ENCODE measurements at regions of chr5 and their contacts with region 1.

Region 1: DNA sequence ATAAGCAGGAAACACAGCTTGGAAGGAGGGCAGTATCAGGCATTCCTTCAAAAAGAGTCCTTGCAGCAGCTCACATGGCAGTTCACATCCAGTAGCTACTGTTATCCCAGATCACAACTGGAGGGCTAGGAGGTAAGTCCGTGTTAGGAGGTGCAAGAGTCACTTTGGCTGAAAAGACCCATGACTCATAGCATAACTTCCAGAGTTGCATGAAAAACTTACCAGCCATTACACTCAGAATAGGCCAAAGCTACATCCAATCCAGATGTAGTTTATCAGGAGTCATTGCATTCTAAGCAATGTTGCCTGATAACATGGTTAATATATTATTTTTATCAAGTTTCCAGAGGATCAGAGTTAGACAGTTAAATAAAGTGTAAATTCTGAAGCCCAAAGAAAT is 1126.4 kb upstream of the SEMA6A start:
- DNase-seq: no peak
- H3K4me3 ChIP-seq: no peak overlapping the region
- H3K27ac ChIP-seq: no peak overlapping the region
- H3K4me1 ChIP-seq: no peaks in the 10 kb centered on the region
- H3K27me3 ChIP-seq: no peaks in the 10 kb centered on the region
- CTCF ChIP-seq: no peak
- POLR2A ChIP-seq: no peak

Region 2: DNA sequence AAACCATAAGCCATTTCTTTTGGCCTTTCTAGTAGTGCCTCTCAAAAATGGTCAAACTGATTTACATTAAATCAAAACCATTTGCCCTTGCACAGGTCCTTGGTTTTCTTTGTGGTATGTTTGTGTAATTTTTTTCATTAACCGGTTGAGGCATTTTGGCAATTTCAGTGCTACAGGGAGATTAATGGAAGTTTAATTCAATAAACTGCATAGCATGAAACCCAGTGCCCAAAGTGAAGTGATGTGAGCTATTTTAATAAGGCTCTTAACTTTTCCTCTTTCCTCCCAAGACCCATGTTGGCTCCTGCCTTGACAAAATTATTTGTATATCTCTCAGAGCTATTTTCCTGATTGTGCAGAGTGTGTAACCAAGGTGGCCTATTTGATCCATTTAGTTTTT is 800.3 kb before region 1 on chr5:
- intact Hi-C with region 1: loop called (anchors 5 kb)
- DNase-seq: no peak
- H3K4me3 ChIP-seq: no peak overlapping the region
- H3K27ac ChIP-seq: no peak overlapping the region
- H3K4me1 ChIP-seq: no peaks in the 10 kb centered on the region
- H3K27me3 ChIP-seq: no peaks in the 10 kb centered on the region
- CTCF ChIP-seq: no peak
- POLR2A ChIP-seq: no peak